PC-9 (cell line): ENCODE measurements at regions of chr18 and their contacts with region 1.

Region 1: GRCh38 chr18:60413944-60414547 is 41.5 kb upstream of the MC4R start:
- DNase-seq: peak in 1 of 2 experiments; percentile 3
- H3K4me3 ChIP-seq: no peak overlapping the region
- H3K27ac ChIP-seq: no peak overlapping the region
- H3K4me1 ChIP-seq: no peaks in the 10 kb centered on the region
- H3K27me3 ChIP-seq: no peaks in the 10 kb centered on the region
- CTCF ChIP-seq: peak; percentile 68

Region 2: DNA sequence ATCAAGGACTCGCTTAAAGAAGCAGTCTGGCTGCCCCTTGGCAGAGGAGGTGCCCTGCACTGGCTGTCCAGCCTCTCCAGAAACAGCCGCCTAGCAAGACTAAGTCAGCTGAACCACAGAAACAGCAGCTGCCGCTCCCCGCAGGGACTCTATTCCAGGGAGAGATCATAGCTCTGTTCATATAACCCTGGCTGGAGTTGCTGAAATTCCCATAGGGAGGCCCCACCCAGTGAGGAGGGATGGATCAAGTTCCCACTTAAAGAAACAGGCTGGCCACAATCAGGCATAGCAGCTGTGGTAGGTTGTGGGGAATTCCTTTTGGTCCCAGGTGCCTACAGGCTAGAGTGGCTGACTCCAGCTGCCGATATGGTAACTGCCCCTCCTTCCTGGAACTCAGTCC is 32.8 kb after region 1 on chr18:
- CTCF ChIA-PET with region 1: no interaction called
- POLR2A ChIA-PET with region 1: no interaction called
- intact Hi-C with region 1: no loop called
- DNase-seq: no peak
- H3K4me3 ChIP-seq: no peak overlapping the region
- H3K27ac ChIP-seq: no peak overlapping the region
- H3K4me1 ChIP-seq: no peaks in the 10 kb centered on the region
- H3K27me3 ChIP-seq: no peaks in the 10 kb centered on the region
- CTCF ChIP-seq: no peak

Region 3: DNA sequence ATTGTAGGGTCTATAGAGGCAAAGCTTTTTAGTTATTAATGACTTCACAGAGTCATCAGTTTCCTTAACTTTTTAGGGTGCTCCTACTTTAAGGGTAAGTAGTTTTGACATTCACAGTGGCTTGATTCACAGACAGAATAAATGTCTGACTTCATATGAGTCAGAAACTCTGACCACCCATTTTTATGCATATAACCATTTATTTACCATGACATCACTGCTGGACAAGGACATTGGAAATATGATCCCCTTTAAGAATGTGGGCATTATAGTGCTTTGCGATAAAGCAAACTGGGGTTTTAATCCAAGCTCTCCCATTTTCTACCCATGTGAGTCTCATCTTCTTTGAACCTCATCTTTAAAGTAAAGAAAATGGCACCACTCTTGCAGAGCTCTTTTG is 120.5 kb after region 1 on chr18:
- CTCF ChIA-PET with region 1: no interaction called
- POLR2A ChIA-PET with region 1: no interaction called
- intact Hi-C with region 1: loop called (anchors 10 kb)
- DNase-seq: no peak
- H3K4me3 ChIP-seq: no peak overlapping the region
- H3K27ac ChIP-seq: no peak overlapping the region
- H3K4me1 ChIP-seq: no peaks in the 10 kb centered on the region
- H3K27me3 ChIP-seq: no peaks in the 10 kb centered on the region
- CTCF ChIP-seq: no peak

Region 4: DNA sequence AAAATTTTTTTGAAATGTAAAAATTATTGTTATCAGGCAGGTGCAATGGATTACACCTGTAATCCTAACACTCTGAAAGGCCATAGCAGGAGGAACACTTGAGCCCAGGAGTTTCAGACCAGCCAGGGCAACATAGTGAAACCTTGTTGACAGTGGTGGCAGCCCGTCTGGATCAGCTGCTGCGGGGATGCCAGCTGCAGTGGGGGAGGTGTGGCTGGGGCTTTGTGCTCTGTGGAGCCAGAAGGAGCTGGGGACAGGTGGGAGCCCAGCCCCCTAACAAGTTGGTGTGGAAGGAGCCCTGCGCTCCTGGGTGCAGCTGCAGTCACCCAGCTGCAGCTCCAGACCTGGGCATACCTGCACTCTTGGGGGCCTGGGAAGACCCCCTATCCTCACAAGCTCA is 140.9 kb after region 1 on chr18:
- CTCF ChIA-PET with region 1: no interaction called
- POLR2A ChIA-PET with region 1: no interaction called
- intact Hi-C with region 1: no loop called
- DNase-seq: no peak
- H3K4me3 ChIP-seq: no peak overlapping the region
- H3K27ac ChIP-seq: no peak overlapping the region
- H3K4me1 ChIP-seq: no peaks in the 10 kb centered on the region
- H3K27me3 ChIP-seq: no peaks in the 10 kb centered on the region
- CTCF ChIP-seq: no peak

Region 5: DNA sequence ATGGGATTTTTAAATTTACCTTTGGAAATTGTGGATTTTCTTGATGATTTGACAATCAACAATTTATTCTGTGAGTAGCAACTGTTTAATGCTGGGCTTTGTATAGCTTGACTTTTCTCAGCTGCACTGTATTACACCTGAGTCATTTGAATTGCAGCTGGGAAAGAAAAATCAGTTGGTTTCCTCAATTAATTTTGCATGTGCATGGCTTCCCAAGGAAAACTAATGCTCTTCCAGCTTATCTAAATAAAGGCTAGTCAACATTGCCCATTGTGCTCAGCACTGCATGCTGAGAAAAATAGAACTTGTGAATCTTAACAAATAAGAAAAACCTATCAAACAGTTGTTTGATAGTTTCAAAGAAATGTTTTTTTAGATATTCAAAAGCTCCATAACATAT is 650.9 kb after region 1 on chr18:
- CTCF ChIA-PET with region 1: no interaction called
- POLR2A ChIA-PET with region 1: no interaction called
- intact Hi-C with region 1: no loop called
- DNase-seq: no peak
- H3K4me3 ChIP-seq: no peak overlapping the region
- H3K27ac ChIP-seq: no peak overlapping the region
- H3K4me1 ChIP-seq: no peaks in the 10 kb centered on the region
- H3K27me3 ChIP-seq: no peaks in the 10 kb centered on the region
- CTCF ChIP-seq: no peak